A673 (cell line): ENCODE measurements at regions of chr12 and their contacts with region 1.

Region 1: GRCh38 chr12:55073043-55074022 is 52.9 kb upstream of the OR9K2 start:
- DNase-seq: peak; percentile 79
- H3K4me3 ChIP-seq: no peak overlapping the region
- H3K27ac ChIP-seq: no peak overlapping the region
- H3K4me1 ChIP-seq: peaks cover 2% of the 10 kb centered on the region
- H3K27me3 ChIP-seq: peaks cover 16% of the 10 kb centered on the region
- CTCF ChIP-seq: peak; percentile 91

Region 2: GRCh38 chr12:54701940-54702592 is 371.3 kb before region 1 on chr12:
- CTCF ChIA-PET with region 1: interaction called, 3 read pairs
- POLR2A ChIA-PET with region 1: no interaction called
- intact Hi-C with region 1: loop called (anchors 2 kb)
- DNase-seq: peak; percentile 70
- H3K4me3 ChIP-seq: no peak overlapping the region
- H3K27ac ChIP-seq: no peak overlapping the region
- H3K4me1 ChIP-seq: peaks cover 13% of the 10 kb centered on the region
- H3K27me3 ChIP-seq: no peaks in the 10 kb centered on the region
- CTCF ChIP-seq: peak; percentile 77

Region 3: DNA sequence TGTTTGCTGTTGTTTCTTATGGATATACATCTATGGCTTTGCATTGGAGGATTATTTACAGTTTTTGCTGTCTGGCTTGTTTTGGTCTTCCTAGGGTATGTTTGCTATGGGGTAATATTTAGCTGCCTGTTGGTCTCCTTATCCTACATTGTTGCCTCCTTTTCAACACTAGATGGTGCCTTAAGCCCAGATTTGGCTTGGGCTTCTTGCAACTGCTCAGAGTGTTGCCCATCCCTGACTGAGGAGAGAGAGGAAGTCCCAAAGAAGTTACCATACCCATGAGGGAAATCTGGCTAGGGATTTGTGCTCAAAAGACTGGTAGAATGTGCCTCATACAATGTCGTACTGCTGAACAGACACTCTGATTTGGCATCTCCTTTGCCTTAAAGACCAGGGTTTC is 313.6 kb before region 1 on chr12:
- CTCF ChIA-PET with region 1: interaction called, 5 read pairs
- POLR2A ChIA-PET with region 1: no interaction called
- intact Hi-C with region 1: loop called (anchors 5 kb)
- DNase-seq: peak; percentile 74
- H3K4me3 ChIP-seq: no peak overlapping the region
- H3K27ac ChIP-seq: no peak overlapping the region
- H3K4me1 ChIP-seq: no peaks in the 10 kb centered on the region
- H3K27me3 ChIP-seq: peaks cover 13% of the 10 kb centered on the region
- CTCF ChIP-seq: peak; percentile 67

Region 4: GRCh38 chr12:54853995-54854566 is 219.3 kb before region 1 on chr12 and contains the start of gene MUCL1:
- CTCF ChIA-PET with region 1: no interaction called
- POLR2A ChIA-PET with region 1: no interaction called
- intact Hi-C with region 1: loop called (anchors 10 kb)
- DNase-seq: peak; percentile 77
- H3K4me3 ChIP-seq: no peak within 1 kb of the TSS
- H3K27ac ChIP-seq: no peak within 1 kb of the TSS
- H3K4me1 ChIP-seq: no peaks in the 10 kb centered on the region
- H3K27me3 ChIP-seq: peaks cover 4% of the 10 kb centered on the region
- CTCF ChIP-seq: peak; percentile 82
- total RNA-seq, gene MUCL1: not detected in 2 replicates

Region 5: GRCh38 chr12:54993161-54993835 is 80.0 kb before region 1 on chr12:
- CTCF ChIA-PET with region 1: interaction called, 55 read pairs
- POLR2A ChIA-PET with region 1: no interaction called
- intact Hi-C with region 1: loop called (anchors 1 kb)
- DNase-seq: peak; percentile 76
- H3K4me3 ChIP-seq: no peak overlapping the region
- H3K27ac ChIP-seq: no peak overlapping the region
- H3K4me1 ChIP-seq: no peaks in the 10 kb centered on the region
- H3K27me3 ChIP-seq: no peaks in the 10 kb centered on the region
- CTCF ChIP-seq: peak; percentile 82